CD4-positive, alpha-beta memory T cell (primary cell): ENCODE measurements at regions of chr1 and their contacts with region 1.

Region 1: DNA sequence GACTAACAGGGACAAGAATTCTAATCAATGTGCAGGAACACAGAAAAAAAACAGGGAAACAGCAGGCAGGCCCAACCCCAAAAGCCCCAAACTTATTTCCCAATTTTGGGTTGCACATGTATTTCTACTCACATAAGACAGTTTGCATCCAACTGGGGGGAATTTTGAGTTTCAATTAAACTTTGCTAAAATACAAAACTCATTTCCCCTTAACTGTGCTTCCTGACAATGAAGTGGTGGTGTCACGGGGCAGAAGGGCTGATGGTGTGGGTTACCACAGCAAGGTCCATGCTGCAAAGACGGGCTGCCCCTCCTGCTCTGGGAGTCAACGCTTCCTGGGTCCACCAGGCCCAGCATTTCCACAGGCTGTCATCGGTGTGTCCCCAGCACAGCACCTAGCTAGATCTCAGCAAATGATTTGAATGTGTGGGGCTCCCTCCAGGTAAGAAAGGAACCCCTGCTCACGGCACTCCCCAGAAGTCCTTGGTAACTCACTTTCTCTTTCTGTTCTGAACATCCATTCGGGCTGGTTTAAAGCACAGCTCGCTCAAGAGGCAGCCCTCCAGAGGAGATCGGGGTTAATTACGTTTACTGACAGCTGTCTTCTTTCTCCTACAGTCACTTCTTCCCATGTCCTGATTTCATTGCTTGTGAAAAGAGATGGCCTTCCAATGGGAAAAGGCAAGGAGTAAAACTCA is 27.4 kb downstream of the HIVEP3 start:
- DNase-seq: peak; percentile 75 to 80 (median 77)
- H3K4me3 ChIP-seq: peak overlapping the region; percentile 48 to 73
- H3K4me3 Mint-ChIP-seq: peak overlapping the region; percentile 81 to 95 (median 87)
- H3K27ac ChIP-seq: peak overlapping the region; percentile 74
- H3K27ac Mint-ChIP-seq: peak overlapping the region; percentile 87 to 97 (median 95)
- H3K4me1 ChIP-seq: peaks cover 52% of the 10 kb centered on the region
- H3K4me1 Mint-ChIP-seq: peaks cover 37 to 66% (median 50%) of the 10 kb centered on the region in 4 donors
- H3K27me3 ChIP-seq: no peaks in the 10 kb centered on the region
- H3K27me3 Mint-ChIP-seq: peaks cover 0 to 2% of the 10 kb centered on the region in 2 donors

Region 2: DNA sequence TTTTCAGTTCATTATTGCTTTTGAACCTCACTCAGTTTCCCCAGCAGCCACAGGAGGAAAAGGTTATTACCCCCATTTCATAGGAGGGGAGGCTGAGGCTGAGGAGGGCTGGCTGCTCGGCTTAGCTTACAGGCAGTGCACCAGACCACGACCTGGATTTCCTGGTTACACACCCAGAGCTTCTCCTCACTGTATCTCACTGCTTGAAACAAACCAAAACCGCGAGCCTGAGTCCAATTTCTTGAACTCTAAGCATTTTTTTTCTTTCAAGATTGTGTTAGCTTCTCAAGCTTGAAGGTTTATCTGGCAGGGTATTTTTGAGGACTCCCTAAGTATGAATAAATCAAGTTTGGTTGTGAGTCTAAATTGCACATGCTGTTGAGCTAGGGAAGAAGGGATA is 218.0 kb before region 1 on chr1:
- CTCF ChIA-PET with region 1: interaction called, 10 read pairs
- POLR2A ChIA-PET with region 1: no interaction called
- intact Hi-C with region 1: loop called (anchors 10 kb)
- DNase-seq: peak; percentile 63 to 78 (median 67)
- H3K4me3 ChIP-seq: peak overlapping the region in 1 of 2 donors; percentile 17
- H3K4me3 Mint-ChIP-seq: peak overlapping the region; percentile 68 to 86 (median 76)
- H3K27ac ChIP-seq: peak overlapping the region; percentile 57
- H3K27ac Mint-ChIP-seq: peak overlapping the region; percentile 76 to 97 (median 89)
- H3K4me1 ChIP-seq: peaks cover 79% of the 10 kb centered on the region
- H3K4me1 Mint-ChIP-seq: peaks cover 68 to 93% (median 78%) of the 10 kb centered on the region in 4 donors
- H3K27me3 ChIP-seq: no peaks in the 10 kb centered on the region
- H3K27me3 Mint-ChIP-seq: no peaks in the 10 kb centered on the region

Region 3: GRCh38 chr1:41812051-41812450 is 79.3 kb before region 1 on chr1:
- CTCF ChIA-PET with region 1: interaction called, 8 read pairs
- POLR2A ChIA-PET with region 1: interaction called, 4 read pairs
- intact Hi-C with region 1: loop called (anchors 5 kb)
- DNase-seq: peak; percentile 49 to 64 (median 60)
- H3K4me3 ChIP-seq: no peak overlapping the region
- H3K4me3 Mint-ChIP-seq: peak overlapping the region in 6 of 8 donors; percentile 12 to 51 (median 39)
- H3K27ac ChIP-seq: no peak overlapping the region
- H3K27ac Mint-ChIP-seq: peak overlapping the region in 4 of 7 donors; percentile 5 to 32 (median 20)
- H3K4me1 ChIP-seq: peaks cover 25% of the 10 kb centered on the region
- H3K4me1 Mint-ChIP-seq: peaks cover 27 to 51% (median 30%) of the 10 kb centered on the region in 4 donors
- H3K27me3 ChIP-seq: no peaks in the 10 kb centered on the region
- H3K27me3 Mint-ChIP-seq: no peaks in the 10 kb centered on the region

Region 4: DNA sequence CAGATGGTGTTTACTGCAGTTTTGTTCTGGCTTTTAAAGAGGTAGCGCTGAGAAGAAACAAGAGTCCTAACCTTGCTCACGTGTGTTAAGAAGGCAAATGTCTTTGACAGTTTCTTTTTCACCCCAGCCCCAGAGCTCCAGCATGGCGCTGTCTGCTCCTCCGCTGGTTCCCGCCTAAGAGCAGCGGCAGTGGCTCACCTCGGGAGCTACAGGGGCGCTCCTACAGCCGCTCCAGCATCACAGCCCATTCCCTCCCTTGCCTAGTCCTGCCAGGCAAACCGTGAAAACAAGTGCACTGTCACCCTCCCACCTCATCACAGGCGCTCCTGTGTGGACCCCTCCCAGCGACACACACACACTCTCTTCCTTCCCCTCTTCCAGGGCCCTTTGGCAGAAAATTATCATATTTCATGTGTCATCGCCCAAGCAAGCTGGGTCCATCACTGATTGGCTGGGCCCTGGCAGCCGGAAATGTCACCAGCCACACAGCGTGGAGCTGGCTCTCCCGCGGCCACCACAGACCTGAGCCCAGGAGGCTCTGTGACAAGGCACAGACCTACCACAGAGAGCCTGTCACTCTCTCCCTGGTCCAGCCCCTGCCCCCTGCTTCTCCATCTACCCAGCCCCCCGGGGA is 28.5 kb after region 1 on chr1:
- CTCF ChIA-PET with region 1: interaction called, 84 read pairs
- POLR2A ChIA-PET with region 1: interaction called, 221 read pairs
- intact Hi-C with region 1: loop called (anchors 1 kb)
- DNase-seq: peak; percentile 78 to 89 (median 85)
- H3K4me3 ChIP-seq: peak overlapping the region; percentile 45 to 68
- H3K4me3 Mint-ChIP-seq: peak overlapping the region; percentile 92 to 98 (median 95)
- H3K27ac ChIP-seq: peak overlapping the region; percentile 50
- H3K27ac Mint-ChIP-seq: peak overlapping the region; percentile 93 to 100 (median 98)
- H3K4me1 ChIP-seq: peaks cover 56% of the 10 kb centered on the region
- H3K4me1 Mint-ChIP-seq: peaks cover 46 to 61% (median 54%) of the 10 kb centered on the region in 4 donors
- H3K27me3 ChIP-seq: no peaks in the 10 kb centered on the region
- H3K27me3 Mint-ChIP-seq: no peaks in the 10 kb centered on the region